PC-3 (cell line): ENCODE measurements at regions of chr4 and their contacts with region 1.

Region 1: GRCh38 chr4:17934286-17934685 is 87.3 kb downstream of the LCORL start:
- DNase-seq: no peak
- ATAC-seq: no peak
- H3K4me3 ChIP-seq: no peak overlapping the region
- H3K27ac ChIP-seq: no peak overlapping the region
- H3K4me1 ChIP-seq: no peaks in the 10 kb centered on the region
- H3K27me3 ChIP-seq: no peaks in the 10 kb centered on the region
- CTCF ChIP-seq: peak; percentile 46; the same call in 1 of the 2 replicates

Region 2: GRCh38 chr4:17817020-17817419 is 117.3 kb before region 1 on chr4:
- CTCF ChIA-PET with region 1: no interaction called
- POLR2A ChIA-PET with region 1: no interaction called
- intact Hi-C with region 1: loop called (anchors 5 kb)
- DNase-seq: peak; percentile 48
- ATAC-seq: peak; percentile 71
- H3K4me3 ChIP-seq: no peak overlapping the region
- H3K27ac ChIP-seq: no peak overlapping the region
- H3K4me1 ChIP-seq: peaks cover 8% of the 10 kb centered on the region; the same call in 1 of the 2 replicates
- H3K27me3 ChIP-seq: no peaks in the 10 kb centered on the region
- CTCF ChIP-seq: peak; percentile 57

Region 3: GRCh38 chr4:17875402-17876070 is 58.8 kb before region 1 on chr4:
- CTCF ChIA-PET with region 1: no interaction called
- POLR2A ChIA-PET with region 1: no interaction called
- intact Hi-C with region 1: no loop called
- DNase-seq: no peak
- ATAC-seq: no peak
- H3K4me3 ChIP-seq: no peak overlapping the region
- H3K27ac ChIP-seq: no peak overlapping the region
- H3K4me1 ChIP-seq: no peaks in the 10 kb centered on the region
- H3K27me3 ChIP-seq: no peaks in the 10 kb centered on the region
- CTCF ChIP-seq: no peak

Region 4: DNA sequence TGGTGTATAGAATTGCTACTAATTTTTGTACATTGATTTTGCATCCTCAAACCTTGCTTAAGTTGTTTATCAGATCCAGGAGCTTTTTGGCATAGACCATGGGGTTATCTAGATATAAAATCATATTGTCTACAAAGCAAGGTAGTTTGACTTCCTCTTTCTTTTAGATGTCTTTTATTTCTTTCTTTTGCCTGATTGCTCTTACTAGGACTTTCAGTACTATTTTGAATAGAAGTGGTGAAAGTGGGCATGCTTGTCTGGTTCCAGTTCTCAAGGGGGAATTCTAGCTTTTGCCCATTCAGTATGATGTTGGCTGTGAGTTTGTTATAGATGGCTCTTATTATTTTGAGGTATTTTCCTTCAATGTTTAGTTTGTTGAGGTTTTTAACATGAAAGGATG is 275.2 kb after region 1 on chr4:
- CTCF ChIA-PET with region 1: no interaction called
- POLR2A ChIA-PET with region 1: no interaction called
- intact Hi-C with region 1: no loop called
- DNase-seq: no peak
- ATAC-seq: no peak
- H3K4me3 ChIP-seq: no peak overlapping the region
- H3K27ac ChIP-seq: no peak overlapping the region
- H3K4me1 ChIP-seq: no peaks in the 10 kb centered on the region
- H3K27me3 ChIP-seq: no peaks in the 10 kb centered on the region
- CTCF ChIP-seq: no peak

Region 5: DNA sequence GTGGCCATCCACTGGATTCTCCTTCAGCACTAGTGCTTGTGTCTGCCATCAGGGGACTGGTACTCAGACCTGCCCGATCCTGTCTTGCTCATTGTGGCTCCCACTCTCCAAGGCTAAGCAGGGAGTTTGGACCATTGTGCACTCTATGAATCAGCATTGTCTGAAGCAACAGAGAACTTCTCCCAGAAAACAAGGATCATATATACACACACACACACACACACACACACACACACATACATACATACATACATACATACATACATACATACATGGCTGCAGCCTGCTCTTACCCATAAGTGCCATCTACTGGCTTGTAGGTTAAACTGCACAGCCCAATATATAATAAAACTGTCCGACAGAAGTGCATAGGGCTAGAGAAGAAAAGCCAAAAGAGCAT is 432.6 kb after region 1 on chr4:
- CTCF ChIA-PET with region 1: no interaction called
- POLR2A ChIA-PET with region 1: no interaction called
- intact Hi-C with region 1: loop called (anchors 5 kb)
- DNase-seq: peak; percentile 48
- ATAC-seq: peak; percentile 69
- H3K4me3 ChIP-seq: no peak overlapping the region
- H3K27ac ChIP-seq: no peak overlapping the region
- H3K4me1 ChIP-seq: no peaks in the 10 kb centered on the region
- H3K27me3 ChIP-seq: no peaks in the 10 kb centered on the region
- CTCF ChIP-seq: peak; percentile 64; the same call in 1 of the 2 replicates